Naive thymus-derived CD4-positive, alpha-beta T cell (primary cell): ENCODE measurements at regions of chr3 and their contacts with region 1.

Region 1: GRCh38 chr3:4633078-4634004 is 140.2 kb downstream of the ITPR1 start:
- DNase-seq: peak in 6 of 9 donors; percentile 24 to 57 (median 44)
- ATAC-seq: peak; percentile 80
- H3K4me3 ChIP-seq: no peak overlapping the region
- H3K4me3 Mint-ChIP-seq: no peak overlapping the region
- H3K27ac ChIP-seq: no peak overlapping the region
- H3K27ac Mint-ChIP-seq: peak overlapping the region in 5 of 9 donors; percentile 1 to 53 (median 43)
- H3K4me1 ChIP-seq: no peaks in the 10 kb centered on the region
- H3K4me1 Mint-ChIP-seq: peaks cover 6 to 9% (median 7%) of the 10 kb centered on the region in 7 donors
- H3K27me3 ChIP-seq: no peaks in the 10 kb centered on the region
- H3K27me3 Mint-ChIP-seq: no peaks in the 10 kb centered on the region

Region 2: DNA sequence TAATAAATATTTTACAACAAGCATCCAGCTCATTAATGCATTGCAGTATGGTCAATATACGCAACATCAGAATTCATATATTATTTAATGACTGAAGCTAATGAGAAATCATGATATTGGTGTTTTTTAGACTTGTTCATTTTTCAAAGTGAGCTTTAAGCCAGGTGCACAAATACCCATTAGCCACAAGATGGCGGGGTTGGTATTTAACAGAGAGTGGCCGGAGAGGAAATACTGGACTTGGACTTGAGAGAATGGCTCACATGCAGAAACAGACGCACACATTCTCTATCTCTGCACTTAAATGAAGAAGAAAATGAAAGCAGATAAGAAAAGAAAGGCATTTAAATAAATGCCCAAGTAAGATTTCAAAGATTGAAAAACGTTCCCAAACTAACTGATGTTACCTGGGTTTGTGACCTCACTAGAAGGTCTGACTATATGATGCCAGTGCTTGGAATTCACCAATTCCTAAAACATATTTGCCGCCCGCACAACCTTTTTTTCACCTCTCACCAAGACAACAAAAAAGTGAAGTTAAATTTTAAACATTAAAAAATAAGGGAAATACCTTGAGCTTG is 1432.6 kb before region 1 on chr3:
- CTCF ChIA-PET with region 1: no interaction called
- POLR2A ChIA-PET with region 1: no interaction called
- intact Hi-C with region 1: loop called in 1 of 2 experiments (anchors 5 kb)
- DNase-seq: peak in 5 of 9 donors; percentile 7 to 39 (median 28)
- ATAC-seq: peak; percentile 71
- H3K4me3 ChIP-seq: no peak overlapping the region
- H3K4me3 Mint-ChIP-seq: peak overlapping the region in 6 of 10 donors; percentile 36 to 76 (median 51)
- H3K27ac ChIP-seq: no peak overlapping the region
- H3K27ac Mint-ChIP-seq: peak overlapping the region in 1 of 9 donors; percentile 58
- H3K4me1 ChIP-seq: no peaks in the 10 kb centered on the region
- H3K4me1 Mint-ChIP-seq: peaks cover 8 to 27% (median 19%) of the 10 kb centered on the region in 7 donors
- H3K27me3 ChIP-seq: no peaks in the 10 kb centered on the region
- H3K27me3 Mint-ChIP-seq: peaks cover 0 to 8% (median 0%) of the 10 kb centered on the region in 5 donors

Region 3: GRCh38 chr3:4303187-4304123 is 329.9 kb before region 1 on chr3 and contains the start of gene SETMAR:
- CTCF ChIA-PET with region 1: no interaction called
- POLR2A ChIA-PET with region 1: no interaction called
- intact Hi-C with region 1: loop called in 1 of 2 experiments (anchors 5 kb)
- DNase-seq: peak; percentile 73 to 86 (median 82)
- ATAC-seq: peak; percentile 97
- H3K4me3 ChIP-seq: peak within 1 kb of the TSS; percentile 92
- H3K4me3 Mint-ChIP-seq: peak within 1 kb of the TSS; percentile 88 to 99 (median 97)
- H3K27ac ChIP-seq: peak within 1 kb of the TSS; percentile 91
- H3K27ac Mint-ChIP-seq: peak within 1 kb of the TSS; percentile 92 to 99 (median 98)
- H3K4me1 ChIP-seq: peaks cover 0 to 8% of the 10 kb centered on the region in 2 donors
- H3K4me1 Mint-ChIP-seq: peaks cover 8 to 45% (median 34%) of the 10 kb centered on the region in 7 donors
- H3K27me3 ChIP-seq: no peaks in the 10 kb centered on the region
- H3K27me3 Mint-ChIP-seq: no peaks in the 10 kb centered on the region
- total RNA-seq, gene SETMAR: 6.4 to 13.7 (median 12.5) TPM

Region 4: DNA sequence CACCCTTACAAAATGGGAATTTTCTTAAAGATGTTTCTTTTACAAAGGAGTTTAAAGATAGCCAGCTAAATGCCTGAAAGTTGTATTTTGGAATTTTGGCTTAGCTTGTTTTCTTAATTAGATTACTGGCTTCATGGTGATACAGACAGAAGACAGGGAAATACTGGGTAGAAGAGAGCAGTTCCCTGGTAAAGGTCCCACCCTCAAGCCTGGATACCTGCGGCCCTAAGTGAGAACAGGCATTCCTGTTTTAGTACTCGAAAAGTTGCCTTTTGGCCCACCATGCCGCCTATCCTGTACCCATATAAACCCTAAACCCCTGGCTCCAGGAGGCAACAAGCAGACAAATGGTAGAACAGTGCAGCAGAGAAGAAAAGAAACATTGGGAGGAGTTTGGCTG is 300.8 kb before region 1 on chr3:
- CTCF ChIA-PET with region 1: no interaction called
- POLR2A ChIA-PET with region 1: no interaction called
- intact Hi-C with region 1: no loop called
- DNase-seq: no peak
- ATAC-seq: no peak
- H3K4me3 ChIP-seq: no peak overlapping the region
- H3K4me3 Mint-ChIP-seq: no peak overlapping the region
- H3K27ac ChIP-seq: no peak overlapping the region
- H3K27ac Mint-ChIP-seq: no peak overlapping the region
- H3K4me1 ChIP-seq: no peaks in the 10 kb centered on the region
- H3K4me1 Mint-ChIP-seq: no peaks in the 10 kb centered on the region
- H3K27me3 ChIP-seq: no peaks in the 10 kb centered on the region
- H3K27me3 Mint-ChIP-seq: peaks cover 0 to 13% (median 0%) of the 10 kb centered on the region in 5 donors

Region 5: DNA sequence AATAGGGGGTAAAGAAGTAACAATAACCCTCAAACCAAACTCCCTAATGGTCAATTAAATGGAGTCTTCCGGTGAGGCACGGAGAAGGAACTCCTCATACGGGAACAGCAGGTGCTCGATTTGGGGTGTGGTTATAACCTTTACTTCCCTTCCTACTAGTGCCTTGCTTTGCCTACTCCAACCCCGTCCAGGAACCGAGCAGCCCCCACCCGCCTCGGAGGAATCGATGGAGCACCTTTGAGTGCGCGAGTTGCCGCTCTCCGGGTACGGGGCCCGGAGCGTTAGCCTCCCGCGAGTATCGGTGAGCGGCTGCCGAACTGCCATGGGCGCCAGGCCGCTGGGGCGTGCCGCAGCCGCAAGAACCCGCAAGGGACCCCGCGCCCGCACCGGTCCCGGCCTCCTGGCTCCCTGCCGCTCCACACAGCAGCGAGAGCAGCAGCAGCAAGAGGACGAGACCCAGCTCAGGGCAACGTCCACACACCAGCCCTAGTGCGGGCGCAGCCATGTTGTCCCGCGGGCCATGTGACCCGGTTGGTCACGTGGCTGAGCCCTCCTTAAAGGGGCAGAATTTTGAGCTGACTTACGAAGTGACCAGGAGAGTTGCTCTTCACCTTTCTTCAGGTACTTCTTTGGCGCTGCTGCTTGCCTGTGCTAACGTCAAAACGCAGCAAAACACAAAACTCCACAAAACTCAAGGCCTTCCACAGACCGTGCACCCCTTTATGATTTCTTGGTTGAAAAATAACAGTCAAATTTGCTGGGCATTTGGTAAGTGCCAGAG is 166.4 kb before region 1 on chr3 and contains the start of gene SUMF1:
- CTCF ChIA-PET with region 1: interaction called, 3 read pairs
- POLR2A ChIA-PET with region 1: no interaction called
- intact Hi-C with region 1: loop called in 1 of 2 experiments (anchors 2 kb)
- DNase-seq: peak; percentile 59 to 79 (median 70)
- ATAC-seq: peak; percentile 98
- H3K4me3 ChIP-seq: peak within 1 kb of the TSS; percentile 90
- H3K4me3 Mint-ChIP-seq: peak within 1 kb of the TSS; percentile 90 to 95 (median 92)
- H3K27ac ChIP-seq: peak within 1 kb of the TSS; percentile 77
- H3K27ac Mint-ChIP-seq: peak within 1 kb of the TSS; percentile 86 to 96 (median 94)
- H3K4me1 ChIP-seq: peaks cover 5 to 7% of the 10 kb centered on the region in 2 donors
- H3K4me1 Mint-ChIP-seq: peaks cover 12 to 38% (median 21%) of the 10 kb centered on the region in 7 donors
- H3K27me3 ChIP-seq: no peaks in the 10 kb centered on the region
- H3K27me3 Mint-ChIP-seq: peaks cover 0 to 2% (median under 1%) of the 10 kb centered on the region in 5 donors
- total RNA-seq, gene SUMF1: 9.2 to 20.0 (median 16.0) TPM

Region 6: DNA sequence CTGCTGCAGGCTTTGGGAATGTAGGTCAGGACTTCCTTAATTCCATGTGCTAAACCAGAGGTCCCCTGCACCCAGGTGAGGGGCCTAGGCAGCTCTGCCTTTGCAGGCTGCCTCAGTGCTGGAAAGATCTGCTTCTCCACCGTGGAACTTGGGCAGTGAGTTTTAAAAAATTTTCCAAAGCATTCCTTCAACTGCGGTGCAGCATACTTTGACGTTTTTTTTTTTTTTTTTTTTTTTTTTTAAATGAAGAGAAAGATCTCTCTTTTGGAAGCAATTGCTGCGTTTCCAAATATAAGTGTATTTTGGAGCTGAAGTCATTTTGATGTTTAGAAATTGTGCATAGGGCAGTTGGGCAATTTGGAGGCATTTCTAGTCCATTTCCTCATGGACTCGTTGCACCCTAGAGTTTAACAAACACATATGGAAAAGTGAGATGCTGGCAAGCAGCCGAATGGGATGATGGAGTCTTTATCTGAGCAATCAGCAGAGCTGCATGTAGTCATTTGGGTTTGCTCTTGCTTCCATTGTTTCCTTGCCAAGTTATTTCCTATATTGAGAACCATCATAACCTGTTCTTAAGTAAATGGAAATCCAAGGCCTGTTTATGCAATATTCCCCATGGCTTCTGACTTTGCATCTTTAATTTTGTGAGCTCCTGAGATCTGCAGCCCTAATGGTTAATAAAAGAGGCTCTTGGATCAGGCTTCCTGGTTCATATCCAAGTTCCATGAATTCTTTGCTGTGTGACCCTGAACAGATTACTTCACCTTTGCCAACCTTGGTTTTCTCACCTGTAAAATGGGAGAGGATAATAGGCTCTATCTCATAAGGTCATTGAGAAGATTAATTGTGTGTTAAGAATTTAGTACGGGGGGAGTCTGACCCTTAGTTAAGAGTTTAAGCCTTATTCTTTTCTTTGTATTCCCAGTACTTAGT is 109.0 kb before region 1 on chr3:
- CTCF ChIA-PET with region 1: interaction called, 30 read pairs
- POLR2A ChIA-PET with region 1: no interaction called
- intact Hi-C with region 1: loop called (anchors 1 to 5 kb)
- DNase-seq: no peak
- ATAC-seq: no peak
- H3K4me3 ChIP-seq: no peak overlapping the region
- H3K4me3 Mint-ChIP-seq: no peak overlapping the region
- H3K27ac ChIP-seq: no peak overlapping the region
- H3K27ac Mint-ChIP-seq: no peak overlapping the region
- H3K4me1 ChIP-seq: peaks cover 3 to 6% of the 10 kb centered on the region in 2 donors
- H3K4me1 Mint-ChIP-seq: peaks cover 21 to 65% (median 34%) of the 10 kb centered on the region in 7 donors
- H3K27me3 ChIP-seq: no peaks in the 10 kb centered on the region
- H3K27me3 Mint-ChIP-seq: no peaks in the 10 kb centered on the region

Region 7: DNA sequence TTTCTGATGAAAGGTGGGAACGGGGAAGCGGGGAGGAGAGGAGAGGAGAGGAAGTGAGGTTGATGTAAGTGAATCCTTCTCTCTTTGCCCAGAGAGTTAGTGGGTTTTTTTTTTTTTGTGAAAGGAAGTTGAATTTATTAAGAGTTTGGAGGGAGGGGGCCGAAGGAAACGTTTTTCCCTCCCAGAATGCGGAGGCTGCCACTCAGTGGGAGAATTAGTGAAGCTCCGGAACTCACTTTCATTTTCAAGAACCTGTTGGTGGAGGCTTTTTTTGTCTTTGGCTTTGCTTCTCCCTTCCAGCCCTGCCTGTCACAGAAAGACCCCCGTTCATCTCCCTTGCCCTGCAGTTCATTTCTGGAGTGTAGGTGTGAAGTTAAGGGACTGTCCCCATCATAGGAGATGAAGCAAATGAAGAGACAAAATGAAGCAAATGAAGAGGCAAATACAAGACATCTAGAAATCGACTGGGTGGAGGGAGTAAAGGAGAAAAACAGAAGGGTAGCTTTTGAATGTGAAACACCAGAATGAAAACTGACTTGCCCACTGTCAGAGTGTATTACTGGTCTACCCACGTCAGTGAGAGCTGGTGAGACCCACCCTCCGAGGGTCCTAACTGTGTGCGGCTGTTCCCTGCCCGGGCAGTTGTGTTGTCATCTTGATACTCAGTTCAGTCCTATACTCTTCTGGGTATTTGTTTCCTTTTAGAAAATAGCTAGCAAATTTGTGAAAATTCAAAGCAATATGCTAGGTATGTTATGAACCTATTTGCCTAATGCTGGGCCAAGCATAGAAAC is 48.7 kb before region 1 on chr3:
- CTCF ChIA-PET with region 1: no interaction called
- POLR2A ChIA-PET with region 1: no interaction called
- intact Hi-C with region 1: no loop called
- DNase-seq: peak in 6 of 9 donors; percentile 6 to 36 (median 26)
- ATAC-seq: peak; percentile 49
- H3K4me3 ChIP-seq: peak overlapping the region; percentile 38
- H3K4me3 Mint-ChIP-seq: peak overlapping the region; percentile 73 to 91 (median 86)
- H3K27ac ChIP-seq: peak overlapping the region; percentile 40
- H3K27ac Mint-ChIP-seq: peak overlapping the region; percentile 77 to 96 (median 85)
- H3K4me1 ChIP-seq: peaks cover 35 to 38% of the 10 kb centered on the region in 2 donors
- H3K4me1 Mint-ChIP-seq: peaks cover 29 to 90% (median 79%) of the 10 kb centered on the region in 7 donors
- H3K27me3 ChIP-seq: no peaks in the 10 kb centered on the region
- H3K27me3 Mint-ChIP-seq: no peaks in the 10 kb centered on the region